ENCODE measurements at regions of chr1 and their contacts with region 1.

Region 1: GRCh38 chr1:163315773-163316374 is 5.9 kb upstream of the NUF2 start:
- DNase-seq: peak; percentile 12
- H3K4me3 ChIP-seq: no peak overlapping the region; a peak in 1 of 4 replicates
- H3K27ac ChIP-seq: peak overlapping the region; percentile 5 to 55; a peak in 3 of 4 replicates
- H3K4me1 ChIP-seq: peaks cover 8 to 9% of the 10 kb centered on the region in 2 experiments; a peak in 3 of 4 replicates
- H3K27me3 ChIP-seq: no peaks in the 10 kb centered on the region
- CTCF ChIP-seq: peak; percentile 88
- EP300 ChIP-seq: no peak
- RAD21 ChIP-seq: peak; percentile 84

Region 2: DNA sequence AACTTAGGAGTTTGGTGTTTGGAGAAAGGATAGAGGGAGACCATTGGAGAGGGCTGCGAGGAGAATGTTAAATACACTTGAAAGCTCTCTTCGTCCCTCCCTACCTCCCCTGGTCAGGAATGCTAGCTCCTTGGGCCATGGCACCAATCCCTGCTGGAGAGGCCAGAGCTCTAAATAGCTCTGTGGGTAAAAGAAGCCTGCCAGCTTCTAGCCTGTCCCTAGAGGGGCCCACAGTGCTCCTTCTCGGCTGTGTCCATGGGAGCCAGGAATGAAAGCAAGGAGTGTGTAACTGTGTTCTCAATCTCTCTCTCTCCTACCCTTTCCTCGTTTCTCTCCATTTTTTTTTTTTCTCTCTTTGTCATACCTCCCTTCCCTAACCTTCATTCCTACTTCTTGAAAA is 454.8 kb before region 1 on chr1 and contains the start of gene CCDC190:
- CTCF ChIA-PET with region 1: interaction called, 23 read pairs
- POLR2A ChIA-PET with region 1: no interaction called
- DNase-seq: no peak
- H3K4me3 ChIP-seq: no peak within 1 kb of the TSS
- H3K27ac ChIP-seq: no peak within 1 kb of the TSS
- H3K4me1 ChIP-seq: peaks cover 3 to 31% of the 10 kb centered on the region in 2 experiments; a peak in 2 of 4 replicates
- H3K27me3 ChIP-seq: no peaks in the 10 kb centered on the region
- CTCF ChIP-seq: no peak
- EP300 ChIP-seq: no peak
- RAD21 ChIP-seq: no peak
- polyA plus RNA-seq, gene CCDC190: 0.13 and 0.21 TPM in 2 replicates

Region 3: DNA sequence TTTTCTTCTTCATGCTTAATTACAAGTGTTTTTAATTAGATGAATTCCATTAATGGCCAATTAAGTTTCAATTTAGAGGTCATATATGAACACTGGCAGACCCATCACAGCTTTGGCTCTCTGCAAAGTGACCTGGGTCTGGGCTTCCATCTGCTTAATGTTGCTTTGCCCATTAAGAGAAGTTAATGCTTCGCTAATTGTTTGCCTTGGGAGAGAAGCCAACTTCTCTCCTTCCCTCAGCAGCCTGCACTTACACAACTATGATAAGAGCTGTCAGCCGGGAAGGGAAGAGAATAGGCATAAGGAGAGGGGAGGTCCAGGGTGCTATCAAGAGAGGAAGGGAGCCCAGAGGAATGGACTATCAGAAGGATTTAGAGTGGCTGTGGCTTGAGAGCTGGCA is 425.9 kb before region 1 on chr1:
- CTCF ChIA-PET with region 1: interaction called, 18 read pairs
- POLR2A ChIA-PET with region 1: interaction called, 3 read pairs
- DNase-seq: peak; percentile 68
- H3K4me3 ChIP-seq: no peak overlapping the region
- H3K27ac ChIP-seq: peak overlapping the region in 1 of 2 experiments; percentile 100; a peak in 2 of 4 replicates
- H3K4me1 ChIP-seq: peaks cover 0 to 68% of the 10 kb centered on the region in 2 experiments; a peak in 3 of 4 replicates
- H3K27me3 ChIP-seq: no peaks in the 10 kb centered on the region
- CTCF ChIP-seq: no peak
- EP300 ChIP-seq: peak; percentile 51 to 100; a peak in 3 of 4 replicates
- RAD21 ChIP-seq: peak; percentile 52

Region 4: DNA sequence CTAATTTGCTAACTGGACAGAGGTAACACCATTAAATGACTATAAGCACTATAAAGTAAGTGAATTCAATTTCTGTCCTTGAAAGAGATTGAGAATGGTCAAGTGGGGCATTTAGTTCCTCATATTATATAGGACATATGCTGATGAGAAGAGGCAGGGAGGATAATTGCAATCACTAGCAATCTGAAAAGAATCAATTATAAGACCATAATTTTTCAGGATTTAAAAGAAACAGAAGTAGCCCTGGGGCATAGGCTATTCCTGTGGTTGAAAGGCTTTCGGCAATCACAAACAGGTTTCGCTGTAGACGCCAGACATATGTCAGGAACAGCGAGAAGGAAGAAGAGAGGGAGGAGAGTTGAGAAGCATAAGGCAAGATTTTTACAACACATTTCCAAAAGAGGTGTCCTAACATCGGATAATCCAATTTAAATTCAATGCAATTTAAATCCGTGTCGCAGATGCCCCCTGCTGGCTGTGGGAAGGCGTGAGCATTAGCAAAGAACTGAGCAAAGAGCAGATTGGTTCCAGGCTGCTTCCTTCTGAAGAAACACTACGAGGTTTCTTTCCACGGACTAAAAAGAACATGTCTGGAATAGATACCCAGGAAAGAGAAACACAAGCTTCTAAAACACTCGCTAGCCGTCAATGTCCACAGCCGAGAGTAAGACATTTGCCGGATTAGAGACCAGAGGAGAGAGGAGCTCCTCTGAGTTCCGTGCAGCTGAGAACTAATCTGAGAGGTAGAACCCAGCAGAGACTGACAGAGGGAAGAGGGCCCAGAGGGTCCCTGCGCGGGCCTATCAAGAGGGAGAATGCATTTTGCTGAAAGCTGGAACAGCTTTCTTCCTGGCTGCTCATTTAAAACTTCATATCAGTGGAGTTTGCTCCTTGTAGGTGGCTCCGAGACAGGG is 141.1 kb before region 1 on chr1:
- CTCF ChIA-PET with region 1: interaction called, 28 read pairs
- POLR2A ChIA-PET with region 1: no interaction called
- DNase-seq: peak; percentile 36
- H3K4me3 ChIP-seq: peak overlapping the region; percentile 19 to 24; a peak in 2 of 4 replicates
- H3K27ac ChIP-seq: peak overlapping the region; percentile 97 to 99
- H3K4me1 ChIP-seq: peaks cover 50 to 74% of the 10 kb centered on the region in 2 experiments
- H3K27me3 ChIP-seq: no peaks in the 10 kb centered on the region
- CTCF ChIP-seq: peak; percentile 97
- EP300 ChIP-seq: peak in 1 of 2 experiments; percentile 92; a peak in 2 of 4 replicates
- RAD21 ChIP-seq: peak; percentile 81

Region 5: GRCh38 chr1:163248064-163248463 is 67.8 kb before region 1 on chr1:
- CTCF ChIA-PET with region 1: interaction called, 14 read pairs
- POLR2A ChIA-PET with region 1: no interaction called
- DNase-seq: peak; percentile 81
- H3K4me3 ChIP-seq: no peak overlapping the region
- H3K27ac ChIP-seq: peak overlapping the region in 1 of 2 experiments; percentile 98; a peak in 2 of 4 replicates
- H3K4me1 ChIP-seq: peaks cover 0 to 14% of the 10 kb centered on the region in 2 experiments; a peak in 3 of 4 replicates
- H3K27me3 ChIP-seq: no peaks in the 10 kb centered on the region
- CTCF ChIP-seq: no peak
- EP300 ChIP-seq: peak in 1 of 2 experiments; percentile 99; a peak in 2 of 4 replicates
- RAD21 ChIP-seq: no peak; the same call in 1 of the 2 replicates

Region 6: DNA sequence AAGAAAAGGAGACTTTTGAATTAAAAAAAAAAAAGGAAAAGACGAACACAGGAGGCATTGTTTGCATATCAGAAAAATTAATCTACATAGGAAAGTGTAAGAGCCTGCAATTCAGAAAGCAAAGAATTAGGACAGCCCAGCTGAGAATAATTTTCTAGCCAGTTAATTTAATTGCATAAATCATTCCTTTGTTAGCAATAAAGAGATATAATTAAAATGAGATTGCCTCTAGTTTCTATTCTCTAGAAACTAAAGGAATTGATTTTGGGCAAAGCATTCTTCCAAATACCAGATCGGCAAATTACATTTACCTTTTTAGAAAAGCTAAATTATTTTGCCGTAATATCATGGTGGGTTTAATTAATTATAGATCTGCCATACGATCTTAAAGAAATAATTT is 51.8 kb after region 1 on chr1:
- CTCF ChIA-PET with region 1: no interaction called
- POLR2A ChIA-PET with region 1: no interaction called
- DNase-seq: no peak
- H3K4me3 ChIP-seq: no peak overlapping the region
- H3K27ac ChIP-seq: no peak overlapping the region
- H3K4me1 ChIP-seq: peaks cover 0 to 5% of the 10 kb centered on the region in 2 experiments; a peak in 2 of 4 replicates
- H3K27me3 ChIP-seq: no peaks in the 10 kb centered on the region; the same call in 1 of the 2 replicates
- CTCF ChIP-seq: no peak
- EP300 ChIP-seq: no peak
- RAD21 ChIP-seq: no peak